Activated B cell treated with CpG ODN at 0.5 μM for 24 hours (primary cell): ENCODE measurements at regions of chr12 and their contacts with region 1.

Region 1: DNA sequence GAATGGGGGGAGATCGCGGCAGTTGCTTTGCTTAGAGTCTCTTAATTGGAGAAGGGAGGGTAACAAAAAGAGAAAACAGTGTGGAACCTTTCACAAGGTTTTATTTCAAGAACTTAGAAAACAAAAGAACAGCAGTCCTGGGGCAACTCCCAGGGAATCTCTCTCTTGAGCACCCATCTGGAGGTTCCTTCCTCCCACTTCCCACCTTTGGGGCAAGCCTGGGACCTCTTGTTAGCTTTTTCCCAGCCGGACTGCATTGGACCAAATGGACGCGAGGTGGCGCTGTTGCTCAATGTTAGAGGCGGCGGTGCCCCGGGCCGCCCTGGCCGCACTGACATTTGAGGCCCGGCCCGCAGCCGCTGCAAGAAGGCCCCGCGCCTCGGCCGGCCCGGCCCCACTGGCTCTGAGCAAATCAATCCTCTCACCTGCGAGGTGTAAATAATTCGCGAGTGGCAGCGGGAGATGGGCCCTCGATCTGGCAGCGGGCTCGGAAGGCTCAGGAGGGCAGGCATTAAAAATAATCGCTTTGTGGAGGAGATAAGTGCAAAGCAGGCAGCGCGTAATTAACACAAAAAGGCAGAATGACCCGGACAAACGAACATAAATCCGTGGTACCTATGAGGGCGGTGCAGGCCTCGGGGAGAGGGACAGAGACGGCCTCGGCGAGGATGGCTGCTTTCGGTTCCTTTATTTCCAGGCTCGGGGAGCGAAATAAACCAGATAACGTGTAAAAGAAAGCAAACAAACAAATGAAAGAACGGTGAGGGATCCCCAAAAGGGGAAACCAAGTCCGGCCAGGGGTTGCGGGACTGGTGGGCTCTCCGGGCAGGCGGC is 2.7 kb upstream of the HOXC8 start:
- DNase-seq: peak; percentile 83
- ATAC-seq: peak; percentile 89
- H3K4me3 Mint-ChIP-seq: peak overlapping the region; percentile 78
- H3K27ac Mint-ChIP-seq: no peak overlapping the region
- H3K4me1 Mint-ChIP-seq: peaks cover 23% of the 10 kb centered on the region
- H3K27me3 Mint-ChIP-seq: peaks cover 77% of the 10 kb centered on the region
- CTCF ChIP-seq: peak; percentile 67

Region 2: GRCh38 chr12:53757095-53757770 is 248.8 kb before region 1 on chr12:
- CTCF ChIA-PET with region 1: no interaction called
- POLR2A ChIA-PET with region 1: no interaction called
- intact Hi-C with region 1: loop called (anchors 10 kb)
- DNase-seq: peak; percentile 75
- ATAC-seq: peak; percentile 75
- H3K4me3 Mint-ChIP-seq: peak overlapping the region; percentile 48
- H3K27ac Mint-ChIP-seq: peak overlapping the region; percentile 8
- H3K4me1 Mint-ChIP-seq: peaks cover 22% of the 10 kb centered on the region
- H3K27me3 Mint-ChIP-seq: peaks cover 29% of the 10 kb centered on the region
- CTCF ChIP-seq: no peak

Region 3: DNA sequence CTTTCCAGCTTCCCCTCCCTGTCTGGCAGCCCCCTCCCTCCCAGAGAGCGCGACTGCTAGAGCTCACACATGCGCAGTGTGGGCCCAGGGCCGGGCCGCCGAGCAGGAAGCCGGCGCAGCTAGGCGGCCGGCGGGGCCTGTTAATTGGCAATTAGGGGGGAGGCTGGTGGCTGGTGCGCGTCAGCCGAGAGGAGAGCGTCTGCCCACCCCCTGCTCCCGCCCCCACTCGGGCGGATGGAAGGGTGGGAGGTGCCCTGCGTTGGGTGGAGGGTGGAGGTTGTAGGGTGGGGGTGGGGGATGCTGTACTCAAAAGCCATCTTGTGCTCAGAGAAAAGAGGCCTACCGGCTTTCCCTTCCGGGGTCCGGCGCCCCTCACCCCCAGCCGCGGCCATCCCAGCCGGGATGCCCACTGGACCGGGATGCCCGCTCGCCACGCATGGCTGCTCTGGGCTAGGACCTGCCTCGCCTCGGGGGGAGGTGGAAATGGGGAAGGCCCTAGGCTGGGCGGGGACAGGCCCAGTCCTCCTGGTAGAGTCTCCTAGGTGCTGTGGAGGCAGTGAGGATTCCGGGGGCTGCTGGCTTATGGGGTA is 11.9 kb after region 1 on chr12:
- CTCF ChIA-PET with region 1: interaction called, 9 read pairs
- POLR2A ChIA-PET with region 1: interaction called, 3 read pairs
- intact Hi-C with region 1: loop called (anchors 1 kb)
- DNase-seq: peak; percentile 67
- ATAC-seq: peak; percentile 88
- H3K4me3 Mint-ChIP-seq: peak overlapping the region; percentile 84
- H3K27ac Mint-ChIP-seq: peak overlapping the region; percentile 72
- H3K4me1 Mint-ChIP-seq: peaks cover 29% of the 10 kb centered on the region
- H3K27me3 Mint-ChIP-seq: peaks cover 64% of the 10 kb centered on the region
- CTCF ChIP-seq: no peak

Region 4: GRCh38 chr12:54047160-54047963 is 41.3 kb after region 1 on chr12:
- CTCF ChIA-PET with region 1: no interaction called
- POLR2A ChIA-PET with region 1: no interaction called
- intact Hi-C with region 1: loop called (anchors 5 kb)
- DNase-seq: no peak
- ATAC-seq: no peak
- H3K4me3 Mint-ChIP-seq: peak overlapping the region; percentile 56
- H3K27ac Mint-ChIP-seq: no peak overlapping the region
- H3K4me1 Mint-ChIP-seq: peaks cover 31% of the 10 kb centered on the region
- H3K27me3 Mint-ChIP-seq: peaks cover 73% of the 10 kb centered on the region
- CTCF ChIP-seq: no peak

Region 5: GRCh38 chr12:54201001-54201794 is 195.1 kb after region 1 on chr12:
- CTCF ChIA-PET with region 1: interaction called, 78 read pairs
- POLR2A ChIA-PET with region 1: interaction called, 5 read pairs
- intact Hi-C with region 1: loop called (anchors 1 kb)
- DNase-seq: peak; percentile 58
- ATAC-seq: peak; percentile 90
- H3K4me3 Mint-ChIP-seq: no peak overlapping the region
- H3K27ac Mint-ChIP-seq: no peak overlapping the region
- H3K4me1 Mint-ChIP-seq: peaks cover 21% of the 10 kb centered on the region
- H3K27me3 Mint-ChIP-seq: peaks cover 53% of the 10 kb centered on the region
- CTCF ChIP-seq: no peak

Region 6: GRCh38 chr12:54214553-54215406 is 208.7 kb after region 1 on chr12:
- CTCF ChIA-PET with region 1: interaction called, 66 read pairs
- POLR2A ChIA-PET with region 1: no interaction called
- intact Hi-C with region 1: no loop called
- DNase-seq: peak; percentile 87
- ATAC-seq: peak; percentile 85
- H3K4me3 Mint-ChIP-seq: peak overlapping the region; percentile 83
- H3K27ac Mint-ChIP-seq: no peak overlapping the region
- H3K4me1 Mint-ChIP-seq: peaks cover 45% of the 10 kb centered on the region
- H3K27me3 Mint-ChIP-seq: peaks cover 5% of the 10 kb centered on the region
- CTCF ChIP-seq: peak; percentile 97